ENCODE measurements at regions of chr20 and their contacts with region 1.

Region 1: DNA sequence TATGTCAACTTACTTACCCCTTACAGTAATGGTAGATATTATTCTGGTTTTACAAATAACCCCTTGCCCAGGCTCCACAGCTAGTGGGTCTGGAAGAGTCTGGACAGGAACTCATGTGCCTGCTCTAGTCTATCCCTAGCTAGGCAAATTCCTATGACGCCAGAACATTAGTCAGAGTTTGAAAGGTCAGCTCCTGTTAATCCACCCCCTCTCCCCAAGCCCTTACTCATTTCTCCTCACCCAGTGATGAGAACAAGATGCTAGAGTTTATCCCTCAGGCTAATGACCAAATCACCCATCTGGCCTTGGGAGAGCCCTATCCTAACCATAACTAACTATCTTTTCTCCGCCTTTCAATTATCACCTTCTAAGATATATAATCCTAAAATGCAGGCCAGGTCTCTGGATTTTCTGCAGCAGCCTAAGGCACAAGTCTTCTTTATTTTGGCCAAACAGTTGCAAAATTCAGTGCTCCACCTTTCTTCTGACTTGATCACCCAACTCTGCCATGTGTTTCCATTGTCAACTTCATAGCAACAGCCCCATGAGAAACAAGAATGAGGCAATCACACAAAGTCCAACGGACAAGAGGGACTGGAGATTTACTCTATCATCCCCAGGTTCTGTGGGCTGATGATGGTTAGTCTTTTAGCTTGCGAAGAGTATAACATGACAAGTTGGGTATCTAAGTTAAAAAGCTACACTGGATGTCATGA is 113.3 kb downstream of the TASP1 start:
- DNase-seq: no peak
- H3K4me3 Mint-ChIP-seq: no peak overlapping the region
- H3K27ac Mint-ChIP-seq: no peak overlapping the region
- H3K4me1 Mint-ChIP-seq: peaks cover 4% of the 10 kb centered on the region
- H3K27me3 Mint-ChIP-seq: no peaks in the 10 kb centered on the region

Region 2: GRCh38 chr20:13449868-13450434 is 75.4 kb before region 1 on chr20:
- intact Hi-C with region 1: loop called (anchors 5 kb)
- DNase-seq: no peak
- H3K4me3 Mint-ChIP-seq: no peak overlapping the region
- H3K27ac Mint-ChIP-seq: no peak overlapping the region
- H3K4me1 Mint-ChIP-seq: no peaks in the 10 kb centered on the region
- H3K27me3 Mint-ChIP-seq: no peaks in the 10 kb centered on the region

Measured in activated T-helper 2 cell treated with anti-CD3 and anti-CD28 coated beads, Interferon-gamma antibody, Interleukin-2, Interleukin-4, amounts not matched to agents 10 μg/mL and 5 μg/mL and 100 μg/mL, durations not matched to agents 14 hours and 24 hours and 36 hours (primary cell).